ENCODE measurements at regions of chr6 and their contacts with region 1.

Region 1: DNA sequence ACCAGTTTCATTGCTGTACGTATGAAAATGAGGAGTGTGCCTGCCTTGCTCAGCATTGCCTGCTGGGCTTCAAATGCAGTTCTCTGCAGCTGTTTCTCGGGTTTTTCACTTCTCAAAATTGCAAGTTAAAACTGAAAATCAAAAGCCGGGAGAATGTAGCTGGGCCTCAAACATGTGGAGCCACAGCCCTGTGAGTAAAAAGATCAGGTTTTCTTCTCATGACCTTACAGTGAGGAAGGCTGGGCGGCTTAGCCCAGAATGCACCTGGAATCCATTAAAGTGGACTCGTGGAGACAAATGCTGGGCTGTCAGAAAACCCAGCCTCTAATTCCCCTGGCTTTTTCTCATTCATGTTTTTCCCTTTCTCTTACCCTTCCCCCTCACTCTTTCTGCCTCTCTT is 34.4 kb downstream of the DSE start:
- DNase-seq: peak; percentile 89
- H3K4me3 ChIP-seq: peak overlapping the region; percentile 52
- H3K27ac ChIP-seq: peak overlapping the region; percentile 92
- H3K4me1 ChIP-seq: peaks cover 47% of the 10 kb centered on the region
- CTCF ChIP-seq: no peak

Region 2: DNA sequence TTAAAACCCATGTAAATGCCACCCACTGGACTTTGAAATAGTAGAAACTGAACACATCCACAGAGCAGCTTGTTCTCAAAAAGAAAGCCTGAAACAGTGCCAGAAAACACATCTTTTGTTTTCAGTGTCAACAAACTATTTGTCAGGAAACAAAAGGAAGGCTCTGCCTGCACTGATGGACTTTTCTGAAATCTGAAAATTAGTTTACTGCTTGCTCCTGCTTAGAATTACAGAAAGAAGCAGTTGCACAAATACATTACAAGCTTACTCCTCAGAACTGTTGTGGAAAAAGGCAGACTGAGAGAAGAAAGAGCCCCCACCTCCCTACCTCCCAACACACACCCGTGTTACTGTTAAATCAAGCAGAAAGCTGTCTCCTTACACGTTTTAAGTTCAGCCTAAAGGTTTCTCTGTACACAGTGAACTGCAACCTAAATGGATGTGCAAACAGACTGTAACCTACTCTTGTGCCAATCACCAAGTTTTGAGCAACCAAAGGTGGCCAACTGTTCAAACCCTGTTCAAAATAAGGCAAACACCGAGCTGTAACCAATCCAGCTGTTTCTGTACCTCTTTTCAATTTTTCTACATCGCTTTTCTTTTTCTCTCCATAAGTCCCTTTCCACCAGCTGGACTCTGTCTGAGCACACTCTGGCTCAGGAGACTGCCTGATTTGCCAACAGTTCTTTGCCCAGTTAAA is 388.1 kb before region 1 on chr6:
- CTCF ChIA-PET with region 1: no interaction called
- POLR2A ChIA-PET with region 1: no interaction called
- intact Hi-C with region 1: loop called (anchors 2 kb)
- DNase-seq: no peak
- H3K4me3 ChIP-seq: no peak overlapping the region
- H3K27ac ChIP-seq: no peak overlapping the region
- H3K4me1 ChIP-seq: peaks cover 43% of the 10 kb centered on the region
- CTCF ChIP-seq: no peak

Region 3: GRCh38 chr6:116100419-116101301 is 304.5 kb before region 1 on chr6 and contains the start of gene NT5DC1:
- CTCF ChIA-PET with region 1: no interaction called
- POLR2A ChIA-PET with region 1: no interaction called
- intact Hi-C with region 1: loop called (anchors 5 kb)
- DNase-seq: peak; percentile 90
- H3K4me3 ChIP-seq: peak within 1 kb of the TSS; percentile 78
- H3K27ac ChIP-seq: peak within 1 kb of the TSS; percentile 82
- H3K4me1 ChIP-seq: peaks cover 37% of the 10 kb centered on the region
- CTCF ChIP-seq: peak; percentile 57
- total RNA-seq, gene NT5DC1: 11.3 and 20.5 TPM in 2 replicates

Region 4: GRCh38 chr6:116279260-116280063 is 125.7 kb before region 1 on chr6 and contains the start of gene TSPYL1:
- CTCF ChIA-PET with region 1: no interaction called
- POLR2A ChIA-PET with region 1: no interaction called
- intact Hi-C with region 1: loop called (anchors 2 kb)
- DNase-seq: peak; percentile 97
- H3K4me3 ChIP-seq: peak within 1 kb of the TSS; percentile 86
- H3K27ac ChIP-seq: peak within 1 kb of the TSS; percentile 78
- H3K4me1 ChIP-seq: peaks cover 68% of the 10 kb centered on the region
- CTCF ChIP-seq: peak; percentile 43
- total RNA-seq, gene TSPYL1: 32.8 and 33.3 TPM in 2 replicates

Region 5: DNA sequence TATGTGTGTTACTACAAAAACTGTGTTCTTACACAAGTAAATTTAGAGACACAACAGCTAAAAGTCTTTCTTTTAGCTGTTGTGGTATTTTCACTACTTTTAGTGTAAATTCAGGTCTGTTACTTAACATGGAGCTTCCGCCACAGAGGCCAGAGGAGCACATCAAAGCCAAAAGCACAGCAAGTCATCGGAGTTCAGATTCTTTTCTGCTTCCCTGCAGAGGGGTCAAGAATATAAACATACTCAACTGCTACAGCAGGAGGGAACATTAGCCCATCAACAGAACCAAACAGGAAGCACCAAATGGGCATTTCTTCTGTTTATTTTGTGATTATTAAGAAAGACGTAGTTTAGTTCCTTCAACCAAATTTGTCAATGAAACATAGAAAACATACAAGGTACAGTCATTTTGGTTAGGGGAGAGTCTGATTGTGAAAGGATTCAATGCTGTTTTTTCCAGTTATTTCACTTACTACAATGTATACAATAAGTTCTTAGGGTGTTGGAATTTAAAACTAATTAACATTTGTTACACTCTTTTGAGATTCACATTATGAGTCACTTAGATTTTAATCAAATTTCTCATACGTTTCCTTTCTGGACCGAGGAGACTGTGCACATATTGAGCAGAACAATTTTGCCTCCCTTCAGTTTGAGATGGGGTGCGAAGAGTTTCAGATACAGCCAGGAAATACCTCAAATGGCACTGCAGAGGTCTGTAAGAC is 77.2 kb before region 1 on chr6:
- CTCF ChIA-PET with region 1: no interaction called
- POLR2A ChIA-PET with region 1: no interaction called
- intact Hi-C with region 1: no loop called
- DNase-seq: no peak
- H3K4me3 ChIP-seq: no peak overlapping the region
- H3K27ac ChIP-seq: no peak overlapping the region
- H3K4me1 ChIP-seq: no peaks in the 10 kb centered on the region
- CTCF ChIP-seq: no peak

Region 6: DNA sequence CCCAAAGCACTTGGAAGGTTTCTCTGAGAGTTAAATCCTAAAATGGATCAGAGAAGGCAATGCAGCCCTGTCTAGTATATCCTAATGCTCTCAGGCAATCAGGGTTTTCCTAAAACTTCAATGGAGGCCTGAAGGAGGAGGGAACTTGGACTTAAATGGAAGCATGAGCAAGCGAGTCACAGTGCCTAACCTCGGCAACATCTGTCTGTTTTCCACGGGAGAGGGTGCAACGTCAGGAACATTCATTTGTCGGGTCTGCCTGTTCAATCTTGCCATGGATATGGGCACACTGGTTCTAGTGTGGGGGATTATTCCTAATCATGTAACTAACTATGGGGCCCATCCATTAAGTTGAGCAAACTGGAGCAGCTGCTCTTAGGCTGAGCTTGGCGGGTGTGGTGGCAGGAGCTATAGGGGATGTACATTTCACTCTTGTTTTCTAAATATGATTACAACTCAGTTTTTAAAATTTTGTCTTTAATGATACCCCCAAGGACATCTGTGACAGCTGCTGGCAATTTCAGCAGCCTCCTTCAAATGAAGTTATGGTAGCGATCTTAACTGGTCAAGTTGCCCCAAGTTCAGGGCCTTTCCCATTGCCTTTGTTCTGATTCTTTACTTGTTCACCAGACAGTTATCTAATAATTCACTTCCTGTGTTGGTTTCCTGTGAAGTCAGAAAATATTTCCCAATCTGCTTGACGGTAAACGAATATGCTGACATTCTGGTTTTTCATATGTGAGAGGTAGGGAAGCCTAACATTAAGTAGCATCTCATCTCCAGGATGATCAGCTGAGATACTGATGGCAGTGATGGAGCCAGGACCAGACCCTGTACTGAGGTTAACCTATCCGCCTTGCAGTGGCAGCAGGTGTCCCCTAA is 12.8 kb before region 1 on chr6:
- CTCF ChIA-PET with region 1: no interaction called
- POLR2A ChIA-PET with region 1: interaction called, 15 read pairs
- intact Hi-C with region 1: no loop called
- DNase-seq: peak; percentile 20
- H3K4me3 ChIP-seq: no peak overlapping the region
- H3K27ac ChIP-seq: no peak overlapping the region
- H3K4me1 ChIP-seq: peaks cover 23% of the 10 kb centered on the region
- CTCF ChIP-seq: no peak

Region 7: DNA sequence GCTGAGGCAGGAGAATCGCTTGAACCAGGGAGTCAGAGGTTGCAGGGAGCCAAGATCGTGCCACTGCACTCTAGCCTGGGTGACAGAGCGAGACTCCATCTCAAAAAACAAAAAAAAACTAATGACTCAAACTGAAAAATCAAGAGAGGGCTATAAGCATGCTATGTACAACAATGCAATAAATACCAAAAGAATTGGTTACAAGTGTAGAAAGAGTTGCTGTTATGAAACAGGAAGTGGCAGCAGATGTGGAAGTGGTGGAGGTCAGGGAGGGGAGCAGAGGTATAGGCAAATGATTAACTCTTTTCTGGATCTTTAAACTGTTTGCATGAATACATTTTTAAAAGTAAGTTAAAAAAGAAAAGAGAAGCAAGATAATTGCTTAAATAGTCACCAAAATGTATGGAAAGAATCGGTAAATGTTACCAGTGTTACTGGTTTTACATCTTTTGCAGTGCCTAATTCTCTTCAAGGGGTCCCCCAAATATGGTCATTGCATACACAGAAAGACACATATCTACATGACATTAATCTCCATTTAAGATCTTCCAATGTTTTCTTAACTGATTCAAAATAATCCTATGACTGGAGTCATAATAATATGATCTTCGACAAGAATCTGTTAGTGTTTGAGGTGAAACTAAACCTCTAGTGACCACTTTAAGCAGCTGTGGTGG is 71.0 kb after region 1 on chr6:
- CTCF ChIA-PET with region 1: no interaction called
- POLR2A ChIA-PET with region 1: interaction called, 5 read pairs
- intact Hi-C with region 1: loop called (anchors 5 kb)
- DNase-seq: peak; percentile 53
- H3K4me3 ChIP-seq: peak overlapping the region; percentile 19
- H3K27ac ChIP-seq: no peak overlapping the region
- H3K4me1 ChIP-seq: peaks cover 20% of the 10 kb centered on the region
- CTCF ChIP-seq: no peak

Region 8: DNA sequence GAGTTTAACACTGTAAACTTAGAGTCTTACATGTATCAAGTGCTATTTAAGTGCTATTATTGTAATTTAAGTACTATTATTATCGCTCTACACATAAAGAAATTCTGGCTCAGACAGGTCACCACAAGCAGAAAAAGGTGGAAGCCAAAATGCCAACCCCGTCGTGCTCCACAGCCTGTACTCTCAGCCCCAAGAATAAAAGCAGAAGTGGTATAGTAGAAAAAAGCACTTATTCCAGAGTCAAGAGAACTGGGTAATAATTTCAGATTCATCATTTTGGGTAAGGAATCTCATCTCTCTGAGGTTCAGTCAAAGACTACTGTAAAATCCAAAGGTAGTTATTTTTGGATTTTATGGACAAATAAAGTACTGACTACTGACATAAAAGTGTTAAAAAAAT is 262.5 kb after region 1 on chr6:
- CTCF ChIA-PET with region 1: no interaction called
- POLR2A ChIA-PET with region 1: no interaction called
- intact Hi-C with region 1: loop called (anchors 10 kb)
- DNase-seq: peak; percentile 61
- H3K4me3 ChIP-seq: peak overlapping the region; percentile 79
- H3K27ac ChIP-seq: peak overlapping the region; percentile 45
- H3K4me1 ChIP-seq: peaks cover 26% of the 10 kb centered on the region
- CTCF ChIP-seq: no peak

Region 9: GRCh38 chr6:116695401-116695800 is 290.3 kb after region 1 on chr6:
- CTCF ChIA-PET with region 1: no interaction called
- POLR2A ChIA-PET with region 1: no interaction called
- intact Hi-C with region 1: no loop called
- DNase-seq: no peak
- H3K4me3 ChIP-seq: no peak overlapping the region
- H3K27ac ChIP-seq: no peak overlapping the region
- H3K4me1 ChIP-seq: no peaks in the 10 kb centered on the region
- CTCF ChIP-seq: no peak

Measured in OCI-LY7 (cell line).